ENCODE measurements at regions of chr22 and their contacts with region 1.

Region 1: DNA sequence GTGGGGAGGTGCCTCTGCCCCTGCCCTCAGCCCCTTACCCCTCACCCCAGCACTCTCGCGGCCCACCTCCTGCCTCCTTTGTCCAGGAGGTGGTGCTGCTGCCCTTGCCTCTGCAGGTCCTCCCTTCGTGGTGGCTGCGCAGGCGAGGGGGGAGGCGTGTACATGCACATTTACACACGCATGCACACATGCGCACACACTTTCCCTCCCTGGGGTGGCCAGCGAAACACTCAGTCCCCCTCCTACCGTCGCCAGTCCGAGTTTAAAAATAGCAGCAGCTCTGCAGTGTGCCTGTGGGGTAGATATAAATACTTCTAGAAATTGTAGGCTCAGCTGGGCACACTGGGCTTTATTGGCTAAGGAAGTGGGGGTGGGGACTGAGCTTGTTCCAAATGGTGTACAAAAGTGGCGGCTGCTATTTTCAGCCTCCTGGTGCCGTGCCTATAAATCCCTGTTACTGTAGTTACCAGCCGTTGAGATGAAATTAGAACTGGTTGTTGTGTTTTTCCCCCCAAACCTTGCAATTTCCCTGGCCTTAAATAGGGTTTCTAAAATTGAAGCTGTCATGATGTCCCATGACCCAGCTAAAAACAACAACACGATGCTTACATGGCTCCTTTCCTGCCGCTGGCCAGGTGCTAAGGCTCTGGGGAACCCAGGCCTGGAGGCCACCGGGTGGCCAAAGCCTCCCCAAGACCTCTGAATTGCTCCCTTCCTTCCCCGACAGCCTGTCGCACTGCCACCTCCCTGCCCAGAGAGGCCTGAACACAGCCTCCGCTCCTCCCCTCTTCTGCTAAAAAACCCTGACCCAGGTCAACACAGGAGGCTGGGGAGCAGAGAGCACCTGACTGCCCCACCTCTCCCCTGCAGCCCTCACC is 12.4 kb downstream of the PICK1 start:
- DNase-seq: peak; percentile 94 to 95
- ATAC-seq: peak; percentile 88
- H3K4me3 ChIP-seq: no peak overlapping the region
- H3K27ac ChIP-seq: peak overlapping the region; percentile 89 to 94
- H3K4me1 ChIP-seq: no peaks in the 10 kb centered on the region
- H3K27me3 ChIP-seq: no peaks in the 10 kb centered on the region

Region 2: GRCh38 chr22:37676736-37677492 is 392.7 kb before region 1 on chr22:
- intact Hi-C with region 1: no loop called
- DNase-seq: peak; percentile 93 to 96
- ATAC-seq: peak; percentile 67
- H3K4me3 ChIP-seq: peak overlapping the region; percentile 60 to 65
- H3K27ac ChIP-seq: peak overlapping the region; percentile 63 to 77
- H3K4me1 ChIP-seq: no peaks in the 10 kb centered on the region
- H3K27me3 ChIP-seq: no peaks in the 10 kb centered on the region

Region 3: GRCh38 chr22:38124236-38124974 is 54.8 kb after region 1 on chr22:
- intact Hi-C with region 1: no loop called
- DNase-seq: no peak
- ATAC-seq: no peak
- H3K4me3 ChIP-seq: no peak overlapping the region
- H3K27ac ChIP-seq: no peak overlapping the region
- H3K4me1 ChIP-seq: no peaks in the 10 kb centered on the region
- H3K27me3 ChIP-seq: no peaks in the 10 kb centered on the region

Region 4: GRCh38 chr22:38257181-38257580 is 187.6 kb after region 1 on chr22:
- intact Hi-C with region 1: loop called in 1 of 2 experiments (anchors 5 kb)
- DNase-seq: no peak
- ATAC-seq: peak; percentile 60
- H3K4me3 ChIP-seq: no peak overlapping the region
- H3K27ac ChIP-seq: peak overlapping the region; percentile 38 to 79
- H3K4me1 ChIP-seq: peaks cover 0 to 8% of the 10 kb centered on the region in 2 donors
- H3K27me3 ChIP-seq: no peaks in the 10 kb centered on the region

Measured in aorta (tissue), 5 donors.